WTC11 (cell line): ENCODE measurements at regions of chr5 and their contacts with region 1.

Region 1: GRCh38 chr5:6783787-6784186 is 70.6 kb downstream of the TENT4A start:
- DNase-seq: no peak
- ATAC-seq: no peak
- H3K4me3 Mint-ChIP-seq: no peak overlapping the region
- H3K27ac Mint-ChIP-seq: no peak overlapping the region
- H3K4me1 Mint-ChIP-seq: no peaks in the 10 kb centered on the region
- H3K27me3 Mint-ChIP-seq: no peaks in the 10 kb centered on the region
- CTCF ChIP-seq: no peak

Region 2: DNA sequence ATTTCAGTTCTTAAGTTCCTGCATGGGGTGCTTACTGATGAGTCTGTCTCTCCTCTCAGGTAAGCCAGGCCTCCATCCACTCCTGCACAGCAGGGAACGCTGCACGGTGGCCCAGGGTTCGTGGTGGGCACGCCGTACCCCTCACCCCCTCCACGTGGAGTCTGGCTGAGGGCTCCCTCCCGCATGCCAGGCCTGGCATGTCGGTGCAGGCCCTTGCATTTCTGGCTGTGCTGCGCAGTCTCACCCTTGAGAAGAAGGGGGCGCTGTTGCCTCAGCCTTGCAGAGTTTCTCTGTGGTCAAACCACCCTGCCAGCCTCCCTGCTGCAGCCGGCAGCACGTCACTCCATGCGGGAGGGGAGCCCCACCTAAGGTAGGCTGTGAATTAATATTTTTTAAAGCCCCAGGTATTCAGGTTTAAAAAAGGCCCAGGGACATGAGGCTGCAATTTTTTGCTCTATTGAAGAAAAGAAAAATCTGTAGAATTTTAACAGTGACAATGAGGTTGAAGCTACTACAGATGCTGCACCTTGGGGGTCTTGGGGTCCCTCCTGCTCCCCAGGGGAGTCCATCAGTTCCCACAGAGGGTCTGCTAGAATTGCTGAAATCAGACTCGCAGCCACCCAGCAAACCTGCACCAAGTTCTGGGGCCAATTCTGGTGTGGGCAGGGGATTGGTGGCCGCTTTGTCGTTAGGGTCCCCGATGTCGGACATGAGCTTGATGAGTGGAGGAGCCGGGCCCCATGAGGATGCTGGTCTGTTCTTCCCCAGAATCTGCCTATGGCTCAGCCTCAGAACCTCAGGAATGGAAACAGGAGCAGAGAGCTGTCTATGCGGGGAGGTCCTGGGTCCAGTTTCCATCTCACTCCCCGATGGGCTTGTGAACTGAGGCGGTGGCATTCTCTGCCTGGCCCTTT is 17.9 kb before region 1 on chr5:
- CTCF ChIA-PET with region 1: interaction called, 11 read pairs
- POLR2A ChIA-PET with region 1: no interaction called
- DNase-seq: peak; percentile 92
- ATAC-seq: peak; percentile 93
- H3K4me3 Mint-ChIP-seq: no peak overlapping the region
- H3K27ac Mint-ChIP-seq: no peak overlapping the region
- H3K4me1 Mint-ChIP-seq: peaks cover 8% of the 10 kb centered on the region
- H3K27me3 Mint-ChIP-seq: no peaks in the 10 kb centered on the region
- CTCF ChIP-seq: peak; percentile 93